BJ (cell line): ENCODE measurements at regions of chr1 and their contacts with region 1.

Region 1: DNA sequence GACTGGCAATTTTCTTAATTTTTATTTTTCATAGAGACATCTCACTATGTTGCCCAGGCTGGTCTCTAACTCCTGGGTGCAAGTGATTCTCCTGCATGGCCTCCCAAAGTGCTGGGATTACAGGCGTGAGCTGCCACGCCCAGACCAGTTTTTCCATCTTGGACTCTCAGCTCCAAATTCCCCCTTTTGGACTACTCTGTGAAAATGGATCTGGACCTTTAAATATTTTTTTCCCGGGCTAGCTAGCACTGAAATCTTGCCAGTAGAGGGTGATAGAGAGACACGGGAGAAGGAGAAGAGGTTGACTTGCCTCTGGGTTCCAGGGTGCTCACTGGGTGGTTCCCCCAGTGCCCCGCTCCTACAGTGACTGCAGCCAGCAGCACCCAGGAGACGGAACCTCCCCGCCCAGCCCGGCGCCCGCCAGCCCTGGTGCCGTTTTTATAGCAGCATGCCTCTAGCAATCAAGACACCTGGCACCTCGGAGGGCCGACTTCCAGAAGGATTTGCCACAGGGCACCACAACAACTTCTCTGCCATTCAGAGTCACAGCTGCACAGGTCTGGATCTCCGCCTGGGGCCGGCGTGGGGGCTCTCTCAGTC is 34.7 kb upstream of the SCCPDH start:
- DNase-seq: no peak
- H3K4me3 ChIP-seq: peak overlapping the region; percentile 38
- H3K27me3 ChIP-seq: no peaks in the 10 kb centered on the region
- CTCF ChIP-seq: peak; percentile 92

Region 2: GRCh38 chr1:246497331-246497915 is 192.1 kb before region 1 on chr1:
- CTCF ChIA-PET with region 1: interaction called, 13 read pairs
- POLR2A ChIA-PET with region 1: no interaction called
- DNase-seq: no peak
- H3K4me3 ChIP-seq: no peak overlapping the region
- H3K27me3 ChIP-seq: no peaks in the 10 kb centered on the region
- CTCF ChIP-seq: peak; percentile 69

Region 3: DNA sequence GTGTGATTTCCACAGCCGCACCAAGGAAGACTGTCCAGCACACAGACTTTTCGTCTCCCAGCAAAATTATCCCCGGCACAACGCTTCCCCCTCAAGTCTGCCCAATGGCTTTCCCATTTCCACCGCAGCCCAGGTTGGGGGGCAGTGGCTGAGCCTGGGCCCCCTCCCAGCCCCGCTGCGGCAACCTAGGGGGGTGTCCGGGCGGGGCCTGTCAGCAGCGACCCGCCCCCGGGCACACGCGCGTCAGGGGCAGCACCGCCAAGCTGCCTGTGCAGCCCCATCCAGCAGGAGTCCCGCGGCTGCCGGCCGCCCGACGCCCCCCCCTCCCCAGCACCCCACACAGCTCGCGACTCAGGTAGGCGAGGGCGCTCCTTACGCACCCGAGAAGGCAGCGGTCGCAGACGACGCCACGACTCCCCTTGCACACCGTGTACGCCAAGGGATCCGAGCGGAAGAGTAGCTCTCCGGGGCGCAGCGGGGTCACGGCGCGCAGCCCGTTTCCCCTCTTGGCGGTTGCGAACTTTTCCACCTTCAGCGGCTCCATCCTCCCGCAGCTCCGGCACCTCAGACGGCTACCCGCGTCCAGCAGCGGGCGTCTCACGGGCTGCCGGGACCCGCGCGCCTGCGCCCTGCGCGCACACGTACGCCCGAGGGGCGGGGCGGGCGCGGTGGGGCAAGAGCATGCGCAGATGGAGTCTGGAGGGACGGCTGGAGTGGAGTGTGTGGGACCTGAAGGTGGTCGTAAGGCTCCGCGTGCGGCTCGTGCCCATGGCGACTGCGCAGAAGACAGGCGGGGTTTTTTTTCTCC is 182.6 kb before region 1 on chr1 and contains the start of gene SMYD3:
- CTCF ChIA-PET with region 1: interaction called, 12 read pairs
- POLR2A ChIA-PET with region 1: no interaction called
- DNase-seq: no peak
- H3K4me3 ChIP-seq: peak within 1 kb of the TSS; percentile 99
- H3K27me3 ChIP-seq: no peaks in the 10 kb centered on the region
- CTCF ChIP-seq: peak; percentile 30
- polyA plus RNA-seq, gene SMYD3: 26.1 and 36.9 TPM in 2 replicates

Region 4: GRCh38 chr1:246591504-246591903 is 98.0 kb before region 1 on chr1:
- CTCF ChIA-PET with region 1: no interaction called
- POLR2A ChIA-PET with region 1: no interaction called
- DNase-seq: no peak
- H3K4me3 ChIP-seq: no peak overlapping the region
- H3K27me3 ChIP-seq: no peaks in the 10 kb centered on the region
- CTCF ChIP-seq: no peak

Region 5: DNA sequence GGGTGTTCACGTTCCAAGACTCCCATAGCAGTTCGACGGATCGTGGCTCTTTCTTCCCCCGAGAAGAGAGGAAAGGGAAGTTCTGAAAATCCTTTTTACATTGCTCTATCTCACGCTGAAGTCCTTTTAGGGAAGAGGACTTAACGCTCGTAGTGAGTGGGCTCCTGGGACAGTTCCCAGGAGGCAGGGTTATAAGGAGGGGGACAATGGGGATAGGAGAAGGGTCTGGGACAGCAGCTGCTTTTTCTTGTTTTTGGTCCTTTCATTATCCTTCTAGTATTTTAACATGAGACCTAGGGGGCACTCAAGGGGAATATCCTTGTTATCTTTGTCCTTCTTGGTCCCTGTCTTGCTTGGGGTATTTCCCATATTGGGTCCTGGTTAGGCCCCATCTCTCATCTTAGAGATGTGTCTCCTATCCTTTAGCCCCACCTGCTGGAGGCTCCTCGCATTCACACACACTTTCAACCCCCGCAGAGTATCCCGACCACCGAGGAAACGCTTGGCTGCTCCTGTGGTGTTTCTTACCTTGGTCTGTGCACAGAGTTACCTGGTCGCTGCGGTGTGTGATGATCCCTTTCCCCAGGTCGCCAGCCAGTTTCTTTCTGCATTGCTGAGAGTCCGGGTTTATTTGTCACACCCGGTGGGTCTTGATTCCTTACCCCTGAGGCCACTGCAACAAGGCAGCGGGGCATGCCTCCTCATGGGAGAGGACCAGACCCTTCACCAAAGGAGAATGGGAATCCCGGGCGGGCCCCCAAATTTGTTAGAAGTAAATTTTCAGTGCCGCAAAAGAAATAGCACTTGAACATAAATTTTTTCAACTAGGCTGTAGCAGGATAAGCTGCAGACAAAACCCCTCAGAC is 64.4 kb after region 1 on chr1:
- CTCF ChIA-PET with region 1: interaction called, 22 read pairs
- POLR2A ChIA-PET with region 1: no interaction called
- DNase-seq: no peak
- H3K4me3 ChIP-seq: no peak overlapping the region
- H3K27me3 ChIP-seq: no peaks in the 10 kb centered on the region
- CTCF ChIP-seq: peak; percentile 80